ENCODE measurements at regions of chr5 and their contacts with region 1.

Region 1: GRCh38 chr5:61933787-61934626 is 372.0 kb upstream of the KIF2A start:
- DNase-seq: peak in 1 of 2 experiments; percentile 69
- H3K4me3 ChIP-seq: no peak overlapping the region
- H3K27ac ChIP-seq: no peak overlapping the region
- H3K4me1 ChIP-seq: no peaks in the 10 kb centered on the region
- H3K27me3 ChIP-seq: no peaks in the 10 kb centered on the region
- CTCF ChIP-seq: peak; percentile 58 to 79 (median 71)
- EP300 ChIP-seq: no peak
- POLR2A ChIP-seq: no peak
- RAD21 ChIP-seq: peak; percentile 94 to 96

Region 2: GRCh38 chr5:61916621-61917620 is 17.1 kb before region 1 on chr5:
- CTCF ChIA-PET with region 1: interaction called, 22 read pairs
- POLR2A ChIA-PET with region 1: no interaction called
- DNase-seq: no peak
- H3K4me3 ChIP-seq: no peak overlapping the region
- H3K27ac ChIP-seq: no peak overlapping the region
- H3K4me1 ChIP-seq: no peaks in the 10 kb centered on the region
- H3K27me3 ChIP-seq: no peaks in the 10 kb centered on the region
- CTCF ChIP-seq: no peak
- EP300 ChIP-seq: no peak
- POLR2A ChIP-seq: no peak
- RAD21 ChIP-seq: no peak

Region 3: DNA sequence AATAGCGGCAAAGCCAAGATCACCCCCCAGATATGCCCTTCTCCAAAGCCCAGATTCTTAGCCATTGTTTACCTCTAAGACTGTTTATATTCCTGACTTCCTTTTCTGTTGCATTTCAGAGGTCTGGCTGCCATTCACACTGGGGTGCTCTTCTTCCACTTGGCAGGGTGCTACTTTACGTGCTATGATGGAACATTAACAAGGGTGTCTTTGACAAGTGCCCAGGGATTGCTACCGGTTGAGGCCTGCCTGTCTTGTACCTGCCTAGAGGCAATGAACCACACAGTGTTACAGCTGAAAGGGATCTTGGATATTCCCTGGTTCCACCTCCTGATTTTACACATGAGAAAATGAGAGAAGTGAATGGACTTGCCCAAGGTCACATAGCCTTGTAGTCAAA is 19.9 kb after region 1 on chr5:
- CTCF ChIA-PET with region 1: no interaction called
- POLR2A ChIA-PET with region 1: no interaction called
- DNase-seq: no peak
- H3K4me3 ChIP-seq: no peak overlapping the region
- H3K27ac ChIP-seq: no peak overlapping the region
- H3K4me1 ChIP-seq: peaks cover 0 to 4% (median 0%) of the 10 kb centered on the region in 4 experiments; a peak in 2 of 7 replicates
- H3K27me3 ChIP-seq: no peaks in the 10 kb centered on the region
- CTCF ChIP-seq: no peak
- EP300 ChIP-seq: no peak
- POLR2A ChIP-seq: no peak
- RAD21 ChIP-seq: no peak

Measured in H1 (cell line).